IMR-90 (cell line): ENCODE measurements at regions of chr4 and their contacts with region 1.

Region 1: GRCh38 chr4:182533964-182534363 is 290.8 kb downstream of the TENM3 start:
- DNase-seq: peak; percentile 74
- ATAC-seq: peak; percentile 42
- H3K4me3 ChIP-seq: no peak overlapping the region
- H3K27ac ChIP-seq: no peak overlapping the region
- H3K4me1 ChIP-seq: peaks cover 2% of the 10 kb centered on the region
- H3K27me3 ChIP-seq: no peaks in the 10 kb centered on the region
- CTCF ChIP-seq: no peak
- POLR2A ChIP-seq: no peak
- RAD21 ChIP-seq: no peak

Region 2: DNA sequence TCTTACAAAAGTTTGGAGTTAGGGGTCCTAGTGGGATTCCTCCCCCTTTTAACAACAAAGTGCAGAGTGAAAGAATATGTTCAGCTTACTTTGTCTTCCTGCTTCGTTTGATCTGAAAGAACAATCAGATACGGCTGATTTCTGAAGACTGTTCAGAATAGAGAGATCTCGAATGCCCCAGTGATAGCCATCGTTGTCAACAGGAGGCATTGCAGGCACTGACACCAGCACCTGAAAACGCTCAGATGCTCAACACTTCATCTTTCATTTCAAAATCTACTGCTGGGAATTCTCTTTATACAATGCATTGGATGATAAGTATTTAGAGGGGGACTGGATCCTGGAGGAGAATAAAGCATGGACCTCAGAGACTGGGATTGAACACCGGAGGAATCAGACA is 477.1 kb before region 1 on chr4:
- CTCF ChIA-PET with region 1: no interaction called
- POLR2A ChIA-PET with region 1: no interaction called
- dilution Hi-C with region 1: no loop called
- in situ Hi-C with region 1: no loop called
- intact Hi-C with region 1: no loop called
- DNase-seq: no peak
- ATAC-seq: no peak
- H3K4me3 ChIP-seq: no peak overlapping the region
- H3K27ac ChIP-seq: no peak overlapping the region
- H3K4me1 ChIP-seq: no peaks in the 10 kb centered on the region
- H3K27me3 ChIP-seq: no peaks in the 10 kb centered on the region
- CTCF ChIP-seq: no peak
- POLR2A ChIP-seq: no peak
- RAD21 ChIP-seq: no peak

Region 3: DNA sequence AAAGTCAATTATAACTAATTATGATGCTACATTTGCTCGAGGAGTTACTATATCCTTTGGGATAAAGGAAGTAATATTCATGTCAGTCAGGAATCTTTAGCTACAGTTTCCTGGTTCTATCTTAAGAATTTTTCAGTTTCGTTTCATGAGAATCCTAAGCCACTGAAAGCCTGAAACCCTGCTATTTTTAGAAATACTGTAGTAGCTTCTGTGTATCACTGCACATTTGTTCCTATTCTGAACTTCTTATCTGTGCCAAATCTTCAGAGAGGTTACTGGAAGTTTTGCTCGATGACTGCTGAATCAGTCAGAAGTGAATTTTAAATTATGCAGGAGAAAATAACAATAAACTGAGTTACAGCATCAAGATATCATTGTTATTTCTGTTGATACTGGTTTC is 41.5 kb before region 1 on chr4:
- CTCF ChIA-PET with region 1: no interaction called
- POLR2A ChIA-PET with region 1: no interaction called
- dilution Hi-C with region 1: no loop called
- in situ Hi-C with region 1: no loop called
- intact Hi-C with region 1: loop called (anchors 5 kb)
- DNase-seq: peak; percentile 76
- ATAC-seq: peak; percentile 72
- H3K4me3 ChIP-seq: peak overlapping the region; percentile 50; the same call in 1 of the 2 replicates
- H3K27ac ChIP-seq: no peak overlapping the region
- H3K4me1 ChIP-seq: peaks cover 7% of the 10 kb centered on the region
- H3K27me3 ChIP-seq: no peaks in the 10 kb centered on the region
- CTCF ChIP-seq: no peak
- POLR2A ChIP-seq: no peak
- RAD21 ChIP-seq: no peak

Region 4: DNA sequence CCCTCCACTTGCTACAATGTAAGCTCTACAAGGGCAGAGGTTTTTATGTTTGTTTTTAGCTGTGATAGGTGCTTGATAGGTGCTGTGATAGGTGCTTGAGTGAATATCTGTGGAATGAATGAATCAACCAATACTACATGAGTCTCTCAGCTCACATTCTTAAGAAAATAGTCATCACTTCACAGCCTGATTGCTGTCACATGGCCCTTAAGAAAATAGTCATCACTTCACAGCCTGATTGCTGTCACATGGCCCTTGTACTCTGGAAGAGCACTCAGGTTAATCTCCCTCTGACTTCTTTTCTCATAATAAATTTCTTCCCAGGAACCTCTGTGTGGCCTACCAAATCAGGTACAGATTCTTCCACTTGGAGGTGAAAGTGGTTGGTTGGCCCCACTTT is 44.4 kb after region 1 on chr4:
- CTCF ChIA-PET with region 1: interaction called, 11 read pairs
- POLR2A ChIA-PET with region 1: no interaction called
- dilution Hi-C with region 1: no loop called
- in situ Hi-C with region 1: no loop called
- intact Hi-C with region 1: no loop called
- DNase-seq: peak; percentile 91
- ATAC-seq: peak; percentile 57
- H3K4me3 ChIP-seq: no peak overlapping the region
- H3K27ac ChIP-seq: no peak overlapping the region
- H3K4me1 ChIP-seq: peaks cover 5% of the 10 kb centered on the region; the same call in 1 of the 2 replicates
- H3K27me3 ChIP-seq: no peaks in the 10 kb centered on the region
- CTCF ChIP-seq: no peak
- POLR2A ChIP-seq: no peak
- RAD21 ChIP-seq: no peak